ENCODE measurements at regions of chr7 and their contacts with region 1.

Region 1: DNA sequence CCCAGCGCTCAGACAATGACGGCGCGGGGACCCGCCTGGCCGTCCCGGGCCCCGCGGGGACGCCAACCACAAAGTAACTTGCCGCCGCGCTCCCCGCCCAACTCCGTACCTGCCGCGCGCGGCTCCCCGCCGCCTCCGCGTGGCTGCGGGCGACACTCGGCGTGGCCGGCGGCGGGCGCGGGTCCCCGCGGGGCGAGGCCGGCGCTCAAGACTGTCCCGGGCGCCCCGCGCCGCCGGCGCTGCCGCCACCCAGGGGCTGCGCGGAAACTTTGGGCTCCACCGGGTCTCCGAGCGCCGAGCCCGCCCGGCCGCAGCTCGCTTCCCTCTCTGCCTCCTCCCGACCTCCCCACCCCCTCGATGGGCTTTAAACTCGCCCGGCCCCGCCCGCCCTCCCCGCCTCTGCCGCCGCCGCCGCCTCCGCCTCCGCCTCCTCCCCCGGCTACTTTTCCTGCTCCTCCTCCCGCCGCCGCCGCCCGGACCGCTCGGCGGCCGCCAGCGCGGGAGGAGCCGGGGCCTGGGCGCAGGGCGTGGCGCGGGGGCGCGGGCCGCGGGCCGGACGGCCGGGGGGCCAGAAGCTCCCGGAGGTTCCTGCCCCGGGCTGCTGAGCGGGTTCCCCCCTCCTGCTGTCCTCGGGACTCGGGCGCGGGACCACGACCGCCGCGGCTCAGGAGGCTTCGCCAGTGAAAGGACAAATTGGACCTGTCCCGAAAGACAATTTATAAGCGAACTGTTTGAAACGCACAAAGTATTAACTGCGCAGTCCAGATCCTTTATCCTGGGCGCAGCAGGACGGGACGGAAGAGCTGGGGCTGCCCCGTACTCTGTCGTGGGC is 10.6 kb upstream of the GRB10 start:
- DNase-seq: peak; percentile 87 to 88 (median 87)
- ATAC-seq: peak; percentile 74 to 86 (median 82)
- H3K4me3 ChIP-seq: peak overlapping the region; percentile 51 to 77 (median 66)
- H3K27ac ChIP-seq: peak overlapping the region; percentile 50 to 77 (median 70)
- H3K4me1 ChIP-seq: peaks cover 0 to 32% (median 6%) of the 10 kb centered on the region in 4 donors
- H3K27me3 ChIP-seq: no peaks in the 10 kb centered on the region
- CTCF ChIP-seq: no peak
- POLR2A ChIP-seq: peak; percentile 57

Region 2: DNA sequence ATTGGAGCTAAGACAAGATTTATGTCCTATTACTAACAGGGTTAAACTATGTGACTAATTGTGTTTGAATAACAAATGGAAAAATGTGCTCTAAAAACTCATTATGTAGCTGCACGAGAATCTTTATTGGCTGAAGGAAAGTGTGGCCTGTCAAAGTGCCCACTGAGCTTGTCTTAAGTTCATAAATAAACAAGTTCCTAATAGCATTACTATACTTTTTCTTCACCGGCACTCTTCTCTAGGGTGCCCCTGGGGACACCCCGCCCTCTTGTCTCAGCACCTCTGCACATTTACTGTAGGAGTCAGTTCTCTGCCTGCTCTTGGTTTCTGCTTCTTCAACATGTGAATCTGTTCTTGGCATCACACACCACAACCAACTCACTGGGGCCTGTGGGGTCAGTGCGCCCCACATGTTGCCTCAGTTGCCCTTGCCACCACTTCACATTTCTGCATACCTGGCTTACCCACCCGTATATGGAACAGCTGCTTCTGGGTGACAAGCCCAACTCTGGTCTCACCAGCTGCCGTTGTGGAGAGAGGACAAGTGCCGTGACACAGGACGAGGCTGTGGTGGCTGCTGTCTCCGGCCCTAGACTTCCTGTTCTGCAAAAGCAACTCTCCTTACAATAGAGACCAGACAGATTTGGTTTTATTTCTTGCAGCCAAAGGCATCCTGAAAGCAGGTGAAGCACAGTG is 131.8 kb before region 1 on chr7:
- intact Hi-C with region 1: no loop called
- DNase-seq: no peak
- ATAC-seq: no peak
- H3K4me3 ChIP-seq: no peak overlapping the region
- H3K27ac ChIP-seq: no peak overlapping the region
- H3K4me1 ChIP-seq: peaks cover 0 to 60% (median 24%) of the 10 kb centered on the region in 4 donors
- H3K27me3 ChIP-seq: no peaks in the 10 kb centered on the region
- CTCF ChIP-seq: no peak
- POLR2A ChIP-seq: no peak

Region 3: GRCh38 chr7:50696810-50697582 is 96.3 kb before region 1 on chr7:
- intact Hi-C with region 1: loop called in 1 of 2 experiments (anchors 10 kb)
- DNase-seq: no peak
- ATAC-seq: peak; percentile 78 to 91 (median 85)
- H3K4me3 ChIP-seq: no peak overlapping the region
- H3K27ac ChIP-seq: peak overlapping the region; percentile 37 to 72 (median 70)
- H3K4me1 ChIP-seq: peaks cover 0 to 30% (median 10%) of the 10 kb centered on the region in 4 donors
- H3K27me3 ChIP-seq: no peaks in the 10 kb centered on the region
- CTCF ChIP-seq: peak; percentile 45 to 70 (median 58)
- POLR2A ChIP-seq: no peak

Region 4: GRCh38 chr7:51069411-51070083 is 276.2 kb after region 1 on chr7:
- intact Hi-C with region 1: loop called in 1 of 2 experiments (anchors 10 kb)
- DNase-seq: no peak
- ATAC-seq: peak in 2 of 4 donors; percentile 10 to 35
- H3K4me3 ChIP-seq: no peak overlapping the region
- H3K27ac ChIP-seq: peak overlapping the region in 1 of 3 donors; percentile 29
- H3K4me1 ChIP-seq: peaks cover 0 to 14% (median 5%) of the 10 kb centered on the region in 4 donors
- H3K27me3 ChIP-seq: no peaks in the 10 kb centered on the region
- CTCF ChIP-seq: no peak
- POLR2A ChIP-seq: no peak

Measured in right lobe of liver (tissue), 6 donors.